Naive thymus-derived CD4-positive, alpha-beta T cell (primary cell): ENCODE measurements at regions of chr4 and their contacts with region 1.

Region 1: GRCh38 chr4:109559983-109560686 is at the start of gene MCUB:
- DNase-seq: peak; percentile 80 to 95 (median 93)
- ATAC-seq: peak; percentile 96
- H3K4me3 ChIP-seq: peak within 1 kb of the TSS; percentile 83
- H3K4me3 Mint-ChIP-seq: peak within 1 kb of the TSS; percentile 89 to 100 (median 98)
- H3K27ac ChIP-seq: peak within 1 kb of the TSS; percentile 96
- H3K27ac Mint-ChIP-seq: peak within 1 kb of the TSS; percentile 90 to 100 (median 98)
- H3K4me1 ChIP-seq: peaks cover 25 to 41% of the 10 kb centered on the region in 2 donors
- H3K4me1 Mint-ChIP-seq: peaks cover 34 to 76% (median 58%) of the 10 kb centered on the region in 7 donors
- H3K27me3 ChIP-seq: no peaks in the 10 kb centered on the region
- H3K27me3 Mint-ChIP-seq: no peaks in the 10 kb centered on the region
- total RNA-seq, gene MCUB: 83.4 to 177 (median 114) TPM

Region 2: GRCh38 chr4:108620101-108620932 is 939.8 kb before region 1 on chr4 and contains the start of gene RPL34:
- CTCF ChIA-PET with region 1: no interaction called
- POLR2A ChIA-PET with region 1: interaction called, 4 read pairs
- intact Hi-C with region 1: loop called (anchors 1 to 2 kb)
- DNase-seq: peak; percentile 85 to 99 (median 96)
- ATAC-seq: peak; percentile 100
- H3K4me3 ChIP-seq: peak within 1 kb of the TSS; percentile 98
- H3K4me3 Mint-ChIP-seq: peak within 1 kb of the TSS; percentile 87 to 99 (median 96)
- H3K27ac ChIP-seq: peak within 1 kb of the TSS; percentile 90
- H3K27ac Mint-ChIP-seq: peak within 1 kb of the TSS; percentile 95 to 99 (median 97)
- H3K4me1 ChIP-seq: peaks cover 29 to 30% of the 10 kb centered on the region in 2 donors
- H3K4me1 Mint-ChIP-seq: peaks cover 33 to 81% (median 66%) of the 10 kb centered on the region in 7 donors
- H3K27me3 ChIP-seq: no peaks in the 10 kb centered on the region
- H3K27me3 Mint-ChIP-seq: peaks cover 0 to 3% (median 0%) of the 10 kb centered on the region in 5 donors
- total RNA-seq, gene RPL34: 1,411 to 3,442 (median 3,215) TPM

Region 3: DNA sequence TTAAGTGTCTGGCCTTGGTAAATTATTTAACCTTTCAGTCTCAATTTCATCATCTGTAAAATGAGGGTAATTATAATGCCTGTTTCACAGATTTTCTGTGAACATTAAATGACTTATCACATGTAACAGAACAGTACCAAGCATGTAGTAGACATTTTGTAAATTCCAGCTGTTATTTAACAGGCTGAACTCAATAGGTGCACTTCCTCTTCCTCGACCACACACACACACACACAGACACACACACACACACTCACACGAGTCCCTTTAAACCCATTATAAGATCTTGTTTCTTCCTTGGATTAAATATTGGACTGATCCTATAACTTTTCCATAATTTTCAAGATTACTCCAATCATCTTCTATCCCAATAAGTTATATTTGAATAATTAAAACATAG is 204.3 kb before region 1 on chr4:
- CTCF ChIA-PET with region 1: no interaction called
- POLR2A ChIA-PET with region 1: no interaction called
- intact Hi-C with region 1: no loop called
- DNase-seq: no peak
- ATAC-seq: no peak
- H3K4me3 ChIP-seq: no peak overlapping the region
- H3K4me3 Mint-ChIP-seq: no peak overlapping the region
- H3K27ac ChIP-seq: no peak overlapping the region
- H3K27ac Mint-ChIP-seq: no peak overlapping the region
- H3K4me1 ChIP-seq: peaks cover 18 to 20% of the 10 kb centered on the region in 2 donors
- H3K4me1 Mint-ChIP-seq: peaks cover 18 to 44% (median 31%) of the 10 kb centered on the region in 7 donors
- H3K27me3 ChIP-seq: peaks cover 0 to 5% of the 10 kb centered on the region in 2 donors
- H3K27me3 Mint-ChIP-seq: peaks cover 18 to 53% (median 38%) of the 10 kb centered on the region in 5 donors

Region 4: DNA sequence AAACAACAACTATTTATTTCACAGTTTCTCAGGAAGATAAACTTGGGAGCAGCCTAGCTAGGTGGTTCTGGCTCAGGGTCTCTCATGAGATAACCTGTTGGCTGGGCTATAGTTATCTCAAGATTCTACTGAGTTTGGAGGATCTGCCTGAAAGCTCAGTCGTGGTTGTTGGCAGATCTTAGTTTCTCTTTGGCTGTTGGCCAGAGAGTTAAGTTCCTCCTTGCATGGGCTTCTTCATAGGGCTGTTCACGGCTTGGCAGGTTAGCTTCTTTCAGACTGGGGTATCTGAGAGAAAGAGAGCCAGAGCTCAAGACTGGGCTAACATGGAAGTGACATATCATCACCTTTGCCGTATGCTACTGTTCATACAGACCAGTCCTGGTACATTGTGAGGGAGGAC is 97.8 kb before region 1 on chr4:
- CTCF ChIA-PET with region 1: no interaction called
- POLR2A ChIA-PET with region 1: no interaction called
- intact Hi-C with region 1: no loop called
- DNase-seq: no peak
- ATAC-seq: no peak
- H3K4me3 ChIP-seq: no peak overlapping the region
- H3K4me3 Mint-ChIP-seq: no peak overlapping the region
- H3K27ac ChIP-seq: peak overlapping the region; percentile 18
- H3K27ac Mint-ChIP-seq: peak overlapping the region in 2 of 9 donors; percentile 10 to 33
- H3K4me1 ChIP-seq: no peaks in the 10 kb centered on the region
- H3K4me1 Mint-ChIP-seq: peaks cover 3 to 74% (median 46%) of the 10 kb centered on the region in 7 donors
- H3K27me3 ChIP-seq: no peaks in the 10 kb centered on the region
- H3K27me3 Mint-ChIP-seq: no peaks in the 10 kb centered on the region

Region 5: GRCh38 chr4:109532182-109532581 is 28.0 kb before region 1 on chr4:
- CTCF ChIA-PET with region 1: interaction called, 4 read pairs
- POLR2A ChIA-PET with region 1: interaction called, 17 read pairs
- intact Hi-C with region 1: loop called in 1 of 2 experiments (anchors 5 kb)
- DNase-seq: no peak
- ATAC-seq: no peak
- H3K4me3 ChIP-seq: no peak overlapping the region
- H3K4me3 Mint-ChIP-seq: no peak overlapping the region
- H3K27ac ChIP-seq: no peak overlapping the region
- H3K27ac Mint-ChIP-seq: peak overlapping the region in 2 of 9 donors; percentile 27 to 28
- H3K4me1 ChIP-seq: no peaks in the 10 kb centered on the region
- H3K4me1 Mint-ChIP-seq: peaks cover 0 to 5% (median 0%) of the 10 kb centered on the region in 7 donors
- H3K27me3 ChIP-seq: no peaks in the 10 kb centered on the region
- H3K27me3 Mint-ChIP-seq: no peaks in the 10 kb centered on the region

Region 6: DNA sequence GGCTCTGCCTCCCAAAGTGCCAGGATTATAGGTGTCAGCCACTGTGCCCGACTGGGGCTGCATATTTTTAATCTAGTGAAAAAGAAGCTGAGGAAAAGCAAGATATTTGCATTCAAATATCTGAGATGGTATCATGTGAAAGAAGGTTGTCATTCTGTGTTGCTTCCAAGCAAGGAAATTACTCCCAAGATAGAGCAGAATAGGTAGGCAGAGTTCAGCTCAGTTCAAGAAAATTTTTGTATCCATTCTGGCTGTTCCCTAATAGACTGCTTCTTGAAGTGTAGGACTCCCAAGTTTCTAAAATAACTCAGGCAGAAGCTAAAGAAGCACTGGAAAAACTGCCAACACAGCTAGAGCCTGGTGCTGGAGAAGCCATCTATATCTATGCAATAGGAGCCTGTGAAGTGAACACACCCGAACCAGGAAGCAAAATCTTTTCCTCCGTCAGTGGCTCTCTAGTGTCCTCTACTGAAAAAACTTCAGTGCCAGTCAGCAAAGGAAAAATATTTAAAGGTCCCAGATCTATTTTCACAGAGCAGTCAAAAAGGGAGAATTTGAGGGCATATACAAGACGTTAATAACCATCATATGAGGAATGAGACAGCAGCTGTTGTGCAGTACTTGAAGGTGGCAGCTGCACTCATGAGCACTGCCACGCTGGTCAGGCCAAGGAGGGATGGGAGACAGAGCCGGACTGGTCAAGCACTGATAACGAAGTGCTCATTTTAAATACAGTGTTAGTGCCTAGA is 14.1 kb after region 1 on chr4:
- CTCF ChIA-PET with region 1: interaction called, 14 read pairs
- POLR2A ChIA-PET with region 1: interaction called, 23 read pairs
- intact Hi-C with region 1: loop called (anchors 1 kb)
- DNase-seq: peak in 7 of 9 donors; percentile 24 to 61 (median 51)
- ATAC-seq: peak; percentile 82
- H3K4me3 ChIP-seq: peak overlapping the region; percentile 17
- H3K4me3 Mint-ChIP-seq: peak overlapping the region; percentile 42 to 83 (median 70)
- H3K27ac ChIP-seq: no peak overlapping the region
- H3K27ac Mint-ChIP-seq: peak overlapping the region in 8 of 9 donors; percentile 26 to 89 (median 75)
- H3K4me1 ChIP-seq: peaks cover 31 to 32% of the 10 kb centered on the region in 2 donors
- H3K4me1 Mint-ChIP-seq: peaks cover 47 to 91% (median 79%) of the 10 kb centered on the region in 7 donors
- H3K27me3 ChIP-seq: no peaks in the 10 kb centered on the region
- H3K27me3 Mint-ChIP-seq: no peaks in the 10 kb centered on the region

Region 7: GRCh38 chr4:109648266-109648996 is 88.3 kb after region 1 on chr4:
- CTCF ChIA-PET with region 1: interaction called, 3 read pairs
- POLR2A ChIA-PET with region 1: interaction called, 66 read pairs
- intact Hi-C with region 1: loop called (anchors 1 kb)
- DNase-seq: peak in 7 of 9 donors; percentile 69 to 91 (median 84)
- ATAC-seq: peak; percentile 96
- H3K4me3 ChIP-seq: peak overlapping the region; percentile 41
- H3K4me3 Mint-ChIP-seq: peak overlapping the region in 8 of 10 donors; percentile 59 to 88 (median 82)
- H3K27ac ChIP-seq: peak overlapping the region; percentile 81
- H3K27ac Mint-ChIP-seq: peak overlapping the region in 5 of 9 donors; percentile 92 to 100 (median 97)
- H3K4me1 ChIP-seq: peaks cover 68 to 70% of the 10 kb centered on the region in 2 donors
- H3K4me1 Mint-ChIP-seq: peaks cover 21 to 43% (median 34%) of the 10 kb centered on the region in 7 donors
- H3K27me3 ChIP-seq: no peaks in the 10 kb centered on the region
- H3K27me3 Mint-ChIP-seq: no peaks in the 10 kb centered on the region

Region 8: DNA sequence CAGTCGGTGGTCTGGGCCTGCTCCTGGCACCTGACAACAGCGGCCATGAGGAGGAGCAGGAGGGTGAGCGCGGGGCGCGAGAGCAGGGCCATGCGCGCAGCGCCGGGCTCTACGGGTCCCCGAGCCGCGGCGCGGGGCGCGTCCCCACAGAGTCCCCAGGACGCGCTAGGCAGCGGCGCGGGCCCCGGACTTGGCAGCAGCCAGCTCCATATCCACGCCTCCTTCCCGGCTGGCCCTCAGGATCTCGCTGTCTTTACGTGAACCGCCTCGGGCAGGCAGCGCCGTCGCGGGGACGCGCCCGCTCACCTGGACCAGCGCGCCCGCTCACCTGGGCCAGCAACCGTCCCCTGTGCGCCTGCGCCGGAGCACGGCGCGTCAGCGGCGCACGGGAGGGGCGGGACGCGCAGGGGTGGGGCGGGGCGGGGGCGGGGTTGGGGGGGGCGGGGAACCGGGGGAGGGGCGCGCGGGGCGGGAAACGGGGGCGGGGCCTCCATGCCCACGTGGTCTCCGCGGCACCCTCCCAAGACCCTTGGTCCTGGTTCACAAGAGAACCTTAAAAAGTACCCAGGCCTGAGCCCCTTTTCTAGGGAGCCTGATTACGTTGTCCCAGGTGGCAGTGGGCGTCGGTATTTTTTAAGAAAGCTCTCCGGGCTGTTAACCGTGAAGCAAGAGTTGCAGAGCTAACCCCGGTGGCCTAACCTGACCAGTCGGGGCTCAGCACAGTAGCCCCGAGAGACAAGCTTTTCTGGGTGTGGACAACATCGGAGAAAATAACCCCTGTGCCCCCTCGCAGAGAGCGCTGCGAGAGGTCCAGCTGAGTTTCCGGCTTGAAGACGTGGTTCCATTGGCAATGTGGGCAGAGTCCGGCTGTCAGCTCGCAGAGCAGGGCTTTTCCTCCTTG is 169.8 kb after region 1 on chr4 and contains the start of gene PLA2G12A:
- CTCF ChIA-PET with region 1: interaction called, 3 read pairs
- POLR2A ChIA-PET with region 1: interaction called, 5 read pairs
- intact Hi-C with region 1: loop called (anchors 1 kb)
- DNase-seq: peak; percentile 75 to 91 (median 86)
- ATAC-seq: peak; percentile 96
- H3K4me3 ChIP-seq: peak within 1 kb of the TSS; percentile 96
- H3K4me3 Mint-ChIP-seq: peak within 1 kb of the TSS; percentile 88 to 96 (median 92)
- H3K27ac ChIP-seq: peak within 1 kb of the TSS; percentile 78
- H3K27ac Mint-ChIP-seq: peak within 1 kb of the TSS; percentile 64 to 95 (median 90)
- H3K4me1 ChIP-seq: peaks cover 10 to 14% of the 10 kb centered on the region in 2 donors
- H3K4me1 Mint-ChIP-seq: peaks cover 12 to 39% (median 30%) of the 10 kb centered on the region in 7 donors
- H3K27me3 ChIP-seq: no peaks in the 10 kb centered on the region
- H3K27me3 Mint-ChIP-seq: peaks cover 0 to 4% (median 0%) of the 10 kb centered on the region in 5 donors
- total RNA-seq, gene PLA2G12A: 11.5 to 15.4 (median 14.5) TPM

Region 9: GRCh38 chr4:109864134-109864533 is 304.0 kb after region 1 on chr4:
- CTCF ChIA-PET with region 1: no interaction called
- POLR2A ChIA-PET with region 1: no interaction called
- intact Hi-C with region 1: no loop called
- DNase-seq: no peak
- ATAC-seq: no peak
- H3K4me3 ChIP-seq: no peak overlapping the region
- H3K4me3 Mint-ChIP-seq: no peak overlapping the region
- H3K27ac ChIP-seq: no peak overlapping the region
- H3K27ac Mint-ChIP-seq: no peak overlapping the region
- H3K4me1 ChIP-seq: no peaks in the 10 kb centered on the region
- H3K4me1 Mint-ChIP-seq: no peaks in the 10 kb centered on the region
- H3K27me3 ChIP-seq: no peaks in the 10 kb centered on the region
- H3K27me3 Mint-ChIP-seq: no peaks in the 10 kb centered on the region